K562 (cell line): ENCODE measurements at regions of chr5 and their contacts with region 1.

Region 1: GRCh38 chr5:113612060-113612496 is 98.6 kb downstream of the YTHDC2 start:
- DNase-seq: peak; percentile 26 to 50 (median 37)
- ATAC-seq: peak; percentile 79
- H3K4me3 ChIP-seq: no peak overlapping the region
- H3K27ac ChIP-seq: no peak overlapping the region
- H3K4me1 ChIP-seq: peaks cover under 1 to 5% of the 10 kb centered on the region in 2 experiments; a peak in 3 of 5 replicates
- H3K27me3 ChIP-seq: no peaks in the 10 kb centered on the region
- CTCF ChIP-seq: peak; percentile 39 to 74 (median 55); a peak in 4 of 6 replicates
- EP300 ChIP-seq: no peak
- POLR2A ChIP-seq: no peak
- RAD21 ChIP-seq: peak; percentile 74 to 83

Region 2: GRCh38 chr5:113632996-113633395 is 20.9 kb after region 1 on chr5:
- CTCF ChIA-PET with region 1: no interaction called
- POLR2A ChIA-PET with region 1: no interaction called
- in situ Hi-C with region 1: no loop called
- intact Hi-C with region 1: no loop called
- DNase-seq: no peak
- ATAC-seq: no peak
- H3K4me3 ChIP-seq: no peak overlapping the region
- H3K27ac ChIP-seq: no peak overlapping the region
- H3K4me1 ChIP-seq: no peaks in the 10 kb centered on the region
- H3K27me3 ChIP-seq: no peaks in the 10 kb centered on the region; a peak in 1 of 5 replicates
- CTCF ChIP-seq: no peak
- EP300 ChIP-seq: no peak
- POLR2A ChIP-seq: no peak
- RAD21 ChIP-seq: no peak

Region 3: GRCh38 chr5:113663880-113664541 is 51.9 kb after region 1 on chr5:
- CTCF ChIA-PET with region 1: no interaction called
- POLR2A ChIA-PET with region 1: interaction called, 3 read pairs
- in situ Hi-C with region 1: no loop called
- intact Hi-C with region 1: loop called (anchors 1 kb)
- DNase-seq: peak in 2 of 4 experiments; percentile 22 to 54
- ATAC-seq: peak; percentile 82
- H3K4me3 ChIP-seq: no peak overlapping the region
- H3K27ac ChIP-seq: no peak overlapping the region
- H3K4me1 ChIP-seq: no peaks in the 10 kb centered on the region
- H3K27me3 ChIP-seq: no peaks in the 10 kb centered on the region
- CTCF ChIP-seq: peak; percentile 42 to 59 (median 58)
- EP300 ChIP-seq: no peak
- POLR2A ChIP-seq: no peak
- RAD21 ChIP-seq: 0 out of 4 replicates have a peak, but pooled peaks of 1 of the 2 experiments have one; percentile 24

Region 4: DNA sequence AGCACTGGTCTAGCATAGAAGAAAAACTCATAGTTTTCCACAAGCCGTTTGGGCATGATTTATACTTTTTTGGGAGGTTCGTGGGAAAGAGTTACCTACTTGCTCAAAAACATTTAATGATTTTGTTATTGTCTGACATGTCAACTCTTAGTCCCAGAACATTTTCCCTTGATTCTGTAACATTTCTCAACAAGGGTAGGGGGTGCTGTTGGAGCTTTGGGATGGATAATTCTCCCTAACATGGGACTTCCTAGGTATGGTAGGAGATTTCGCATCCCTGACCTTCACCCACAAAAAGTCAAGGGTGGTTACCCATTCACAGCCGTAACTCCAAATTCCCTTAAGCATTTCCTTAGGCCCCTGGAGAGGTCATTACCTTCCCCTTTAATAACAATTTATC is 279.4 kb after region 1 on chr5:
- CTCF ChIA-PET with region 1: no interaction called
- POLR2A ChIA-PET with region 1: no interaction called
- in situ Hi-C with region 1: no loop called
- intact Hi-C with region 1: no loop called
- DNase-seq: no peak
- ATAC-seq: no peak
- H3K4me3 ChIP-seq: no peak overlapping the region
- H3K27ac ChIP-seq: no peak overlapping the region
- H3K4me1 ChIP-seq: no peaks in the 10 kb centered on the region
- H3K27me3 ChIP-seq: no peaks in the 10 kb centered on the region
- CTCF ChIP-seq: no peak
- EP300 ChIP-seq: no peak
- POLR2A ChIP-seq: no peak
- RAD21 ChIP-seq: no peak

Region 5: DNA sequence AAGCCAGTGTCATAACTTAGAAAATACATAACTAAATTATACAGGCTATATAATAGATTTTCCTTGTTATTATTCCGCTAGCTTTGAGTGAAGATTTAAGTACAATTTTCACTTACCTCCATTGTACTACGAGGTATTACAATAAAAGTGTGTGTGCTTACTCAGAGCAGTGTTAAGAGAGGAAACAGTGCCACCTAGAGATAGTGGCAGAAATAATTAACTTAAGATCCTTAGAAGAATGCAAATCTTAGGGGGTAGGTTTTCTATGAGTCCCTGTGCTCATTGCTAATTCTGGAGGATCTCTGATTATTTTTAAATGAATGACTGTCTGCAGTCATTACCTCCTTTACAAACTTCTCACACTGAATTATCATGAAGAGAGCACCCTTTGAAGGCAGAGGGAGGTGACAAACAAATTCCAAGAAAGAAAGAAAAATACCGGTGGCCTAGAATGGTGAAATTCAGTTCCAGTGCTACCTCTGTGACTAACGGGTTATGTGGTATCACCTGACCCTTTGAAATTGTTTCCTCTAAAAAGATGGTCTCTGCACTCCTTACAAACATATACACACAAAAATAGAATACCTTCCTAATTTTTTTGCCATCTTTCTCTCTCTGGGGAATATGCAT is 1177.8 kb after region 1 on chr5:
- CTCF ChIA-PET with region 1: no interaction called
- POLR2A ChIA-PET with region 1: no interaction called
- in situ Hi-C with region 1: no loop called
- intact Hi-C with region 1: loop called (anchors 10 kb)
- DNase-seq: peak in 2 of 4 experiments; percentile 2 to 3
- ATAC-seq: no peak
- H3K4me3 ChIP-seq: no peak overlapping the region
- H3K27ac ChIP-seq: no peak overlapping the region
- H3K4me1 ChIP-seq: no peaks in the 10 kb centered on the region
- H3K27me3 ChIP-seq: no peaks in the 10 kb centered on the region
- CTCF ChIP-seq: peak in 1 of 3 experiments; percentile 12; a peak in 1 of 6 replicates
- EP300 ChIP-seq: no peak
- POLR2A ChIP-seq: no peak
- RAD21 ChIP-seq: peak in 1 of 2 experiments; percentile 47; a peak in 2 of 4 replicates

Region 6: GRCh38 chr5:115069087-115069968 is 1457.2 kb after region 1 on chr5:
- CTCF ChIA-PET with region 1: interaction called, 3 read pairs
- POLR2A ChIA-PET with region 1: no interaction called
- in situ Hi-C with region 1: no loop called
- intact Hi-C with region 1: loop called (anchors 1 kb)
- DNase-seq: peak in 2 of 4 experiments; percentile 17 to 46
- ATAC-seq: peak; percentile 78
- H3K4me3 ChIP-seq: no peak overlapping the region
- H3K27ac ChIP-seq: no peak overlapping the region
- H3K4me1 ChIP-seq: no peaks in the 10 kb centered on the region
- H3K27me3 ChIP-seq: no peaks in the 10 kb centered on the region
- CTCF ChIP-seq: peak; percentile 53 to 64 (median 57); a peak in 4 of 6 replicates
- EP300 ChIP-seq: no peak
- POLR2A ChIP-seq: no peak
- RAD21 ChIP-seq: peak; percentile 49 to 73

Region 7: GRCh38 chr5:115586601-115587048 is 1974.5 kb after region 1 on chr5:
- CTCF ChIA-PET with region 1: no interaction called
- POLR2A ChIA-PET with region 1: no interaction called
- in situ Hi-C with region 1: no loop called
- intact Hi-C with region 1: loop called (anchors 10 kb)
- DNase-seq: peak; percentile 14 to 25 (median 16)
- ATAC-seq: peak; percentile 53; the same call in 1 of the 3 replicates
- H3K4me3 ChIP-seq: no peak overlapping the region
- H3K27ac ChIP-seq: no peak overlapping the region
- H3K4me1 ChIP-seq: no peaks in the 10 kb centered on the region
- H3K27me3 ChIP-seq: no peaks in the 10 kb centered on the region
- CTCF ChIP-seq: peak in 2 of 3 experiments; percentile 43 to 60; a peak in 4 of 6 replicates
- EP300 ChIP-seq: no peak
- POLR2A ChIP-seq: no peak
- RAD21 ChIP-seq: peak; percentile 70 to 72